Activated CD4-positive, alpha-beta T cell treated with anti-CD3 and anti-CD28 coated beads, Interleukin-2, amount 10 ng/mL, durations not matched to agents 7 days and 5 days (primary cell): ENCODE measurements at regions of chr6 and their contacts with region 1.

Region 1: DNA sequence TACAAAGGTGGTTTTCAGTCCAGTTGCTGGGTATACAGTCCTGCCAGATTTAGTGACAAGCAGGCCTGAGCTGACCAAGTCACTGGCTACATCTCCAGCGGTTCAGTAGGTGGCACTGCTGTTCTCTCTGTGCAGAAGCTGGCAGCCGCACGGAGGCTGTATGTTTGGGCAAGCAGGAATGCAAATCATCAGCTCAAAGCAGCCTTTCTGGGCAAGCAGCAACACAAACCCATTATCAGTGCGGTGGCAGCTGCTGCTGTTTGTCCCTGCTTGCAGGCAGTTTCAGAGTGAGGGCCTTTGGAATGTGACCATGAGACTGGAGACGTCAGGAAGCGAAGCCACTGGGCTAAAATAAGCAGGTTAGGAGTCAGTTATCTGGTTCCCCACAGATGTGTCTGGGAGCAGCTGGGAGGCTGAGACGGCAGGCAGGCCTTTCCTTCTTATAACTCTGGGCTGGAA is 72.5 kb downstream of the TXLNB start:
- DNase-seq: peak; percentile 82
- H3K4me3 Mint-ChIP-seq: no peak overlapping the region
- H3K27ac Mint-ChIP-seq: peak overlapping the region; percentile 85
- H3K4me1 Mint-ChIP-seq: peaks cover 12% of the 10 kb centered on the region
- H3K27me3 Mint-ChIP-seq: no peaks in the 10 kb centered on the region

Region 2: DNA sequence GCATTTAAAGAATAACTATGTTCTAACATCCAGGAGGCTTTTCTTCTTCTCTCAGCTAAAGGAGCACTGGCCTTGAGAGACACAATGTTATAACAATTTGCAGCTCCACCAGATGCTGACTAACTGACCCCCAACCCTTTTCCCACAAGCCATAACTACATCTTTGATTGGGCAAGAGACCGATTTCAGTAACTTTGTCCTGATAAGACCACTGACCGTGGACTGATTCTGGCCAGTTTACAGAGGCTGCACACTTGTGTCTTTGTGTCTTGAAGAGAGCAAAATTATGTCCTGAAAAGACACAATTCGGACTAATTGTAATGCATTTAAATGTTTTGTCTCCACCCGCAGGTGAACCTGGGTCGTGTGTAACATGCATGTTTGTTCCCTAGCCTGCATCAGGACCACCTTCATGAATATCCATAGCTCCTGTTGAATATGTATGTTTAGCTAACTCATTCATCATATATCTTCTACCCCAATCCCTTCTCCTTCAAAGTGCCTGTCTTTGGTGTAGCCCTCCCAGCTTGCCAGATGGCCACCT is 168.5 kb before region 1 on chr6:
- CTCF ChIA-PET with region 1: no interaction called
- POLR2A ChIA-PET with region 1: no interaction called
- DNase-seq: no peak
- H3K4me3 Mint-ChIP-seq: no peak overlapping the region
- H3K27ac Mint-ChIP-seq: no peak overlapping the region
- H3K4me1 Mint-ChIP-seq: no peaks in the 10 kb centered on the region
- H3K27me3 Mint-ChIP-seq: peaks cover 1% of the 10 kb centered on the region

Region 3: GRCh38 chr6:139161817-139162284 is 57.4 kb before region 1 on chr6:
- CTCF ChIA-PET with region 1: interaction called, 12 read pairs
- POLR2A ChIA-PET with region 1: no interaction called
- DNase-seq: peak; percentile 79
- H3K4me3 Mint-ChIP-seq: peak overlapping the region; percentile 50
- H3K27ac Mint-ChIP-seq: peak overlapping the region; percentile 95
- H3K4me1 Mint-ChIP-seq: peaks cover 84% of the 10 kb centered on the region
- H3K27me3 Mint-ChIP-seq: no peaks in the 10 kb centered on the region

Region 4: DNA sequence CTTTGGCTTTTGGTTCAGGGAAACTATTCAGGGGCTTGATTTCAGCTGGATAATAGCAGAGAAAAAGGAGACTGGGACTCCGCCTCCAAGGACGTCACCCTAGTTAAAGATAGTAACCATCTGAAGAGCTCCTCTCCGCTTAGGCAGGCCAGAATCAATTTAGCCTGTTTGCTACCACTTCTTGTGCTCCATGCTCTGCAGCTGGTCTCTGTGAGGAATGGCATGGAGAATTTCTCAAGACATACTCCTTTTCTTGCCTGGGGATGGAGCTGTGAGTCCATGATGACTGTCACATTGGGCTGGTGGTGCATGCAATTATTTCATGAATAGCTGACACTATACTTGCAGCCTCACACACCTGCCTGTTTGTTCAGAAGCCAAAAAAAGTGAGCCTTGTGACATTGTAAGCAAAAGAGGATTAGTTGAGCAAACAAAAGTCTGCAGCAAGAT is 11.1 kb after region 1 on chr6:
- CTCF ChIA-PET with region 1: interaction called, 17 read pairs
- POLR2A ChIA-PET with region 1: no interaction called
- DNase-seq: no peak
- H3K4me3 Mint-ChIP-seq: no peak overlapping the region
- H3K27ac Mint-ChIP-seq: no peak overlapping the region
- H3K4me1 Mint-ChIP-seq: no peaks in the 10 kb centered on the region
- H3K27me3 Mint-ChIP-seq: no peaks in the 10 kb centered on the region

Region 5: GRCh38 chr6:139364302-139364981 is 145.1 kb after region 1 on chr6:
- CTCF ChIA-PET with region 1: interaction called, 30 read pairs
- POLR2A ChIA-PET with region 1: no interaction called
- DNase-seq: no peak
- H3K4me3 Mint-ChIP-seq: no peak overlapping the region
- H3K27ac Mint-ChIP-seq: peak overlapping the region; percentile 51
- H3K4me1 Mint-ChIP-seq: peaks cover 43% of the 10 kb centered on the region
- H3K27me3 Mint-ChIP-seq: no peaks in the 10 kb centered on the region

Region 6: DNA sequence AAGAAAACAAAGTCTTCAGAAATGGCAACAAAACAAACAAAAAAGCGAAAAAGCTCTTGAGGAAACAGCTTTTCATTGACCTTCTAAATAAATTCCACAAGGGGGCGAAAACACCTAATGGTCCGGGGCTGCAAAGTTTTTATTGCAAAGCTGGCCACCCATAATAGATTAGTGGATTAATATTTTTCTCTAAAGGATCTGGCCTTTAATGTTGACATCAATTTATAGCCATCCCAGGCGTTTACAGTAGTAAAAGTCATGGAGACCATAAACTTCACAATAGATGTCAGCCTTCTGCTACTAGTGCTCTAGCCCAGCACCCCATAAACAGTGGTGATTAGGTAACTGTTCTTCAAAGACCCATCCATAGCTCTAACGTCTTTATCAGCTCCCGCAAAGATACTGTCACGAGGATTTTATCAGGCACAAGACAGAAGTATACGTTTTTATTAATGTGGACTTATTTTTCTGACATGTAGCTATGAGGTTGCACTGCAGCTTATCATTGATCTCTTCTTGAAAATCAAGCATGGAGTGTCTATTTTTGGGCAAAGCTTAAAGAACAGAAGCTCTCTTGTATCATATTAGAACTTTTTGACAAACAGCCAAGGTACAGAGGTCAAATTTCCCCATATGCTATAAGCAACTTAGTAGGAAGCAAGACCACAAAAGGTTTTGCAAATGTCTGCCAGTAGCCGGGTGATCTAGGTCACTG is 150.4 kb after region 1 on chr6:
- CTCF ChIA-PET with region 1: interaction called, 30 read pairs
- POLR2A ChIA-PET with region 1: no interaction called
- DNase-seq: peak; percentile 22
- H3K4me3 Mint-ChIP-seq: no peak overlapping the region
- H3K27ac Mint-ChIP-seq: no peak overlapping the region
- H3K4me1 Mint-ChIP-seq: peaks cover 44% of the 10 kb centered on the region
- H3K27me3 Mint-ChIP-seq: no peaks in the 10 kb centered on the region

Region 7: DNA sequence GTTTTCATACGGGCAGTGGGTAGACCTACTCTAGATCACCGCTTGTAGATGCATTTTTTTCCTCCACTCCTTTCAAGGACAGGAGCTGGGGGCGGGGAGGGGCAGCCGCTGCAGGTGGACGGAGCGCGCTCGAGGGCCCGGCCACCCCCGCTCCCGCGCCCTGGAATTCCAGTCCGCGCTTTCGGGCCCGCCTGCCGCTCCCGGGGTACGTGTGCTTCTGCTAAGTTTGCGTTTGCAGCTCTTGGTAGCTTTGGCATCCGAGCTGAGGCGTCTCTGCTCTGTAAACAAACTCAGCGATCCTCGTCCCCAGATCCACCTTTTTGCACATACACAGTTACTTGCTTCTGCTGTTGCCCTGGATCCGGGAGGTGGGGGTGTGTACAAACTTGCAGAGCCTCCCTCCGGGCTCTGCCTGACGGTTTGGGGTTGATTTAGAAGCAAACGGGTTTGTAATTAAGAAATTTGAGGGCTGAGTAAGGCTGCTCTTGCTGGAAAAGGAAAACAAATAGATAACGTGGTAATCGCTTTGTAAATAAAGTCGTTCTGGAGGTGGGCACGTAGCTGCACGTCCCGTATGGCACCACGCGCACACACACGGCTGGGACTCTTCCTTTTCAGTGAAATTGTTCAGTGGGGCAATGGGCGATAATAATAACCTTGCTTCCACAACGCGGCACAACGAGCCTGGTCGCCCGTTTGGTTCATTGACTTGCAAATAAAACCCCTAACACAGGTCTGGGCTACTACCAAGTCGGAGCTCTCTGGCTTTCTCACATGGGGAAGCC is 156.1 kb after region 1 on chr6:
- CTCF ChIA-PET with region 1: interaction called, 26 read pairs
- POLR2A ChIA-PET with region 1: no interaction called
- DNase-seq: peak; percentile 89
- H3K4me3 Mint-ChIP-seq: peak overlapping the region; percentile 93
- H3K27ac Mint-ChIP-seq: peak overlapping the region; percentile 99
- H3K4me1 Mint-ChIP-seq: peaks cover 37% of the 10 kb centered on the region
- H3K27me3 Mint-ChIP-seq: no peaks in the 10 kb centered on the region

Region 8: DNA sequence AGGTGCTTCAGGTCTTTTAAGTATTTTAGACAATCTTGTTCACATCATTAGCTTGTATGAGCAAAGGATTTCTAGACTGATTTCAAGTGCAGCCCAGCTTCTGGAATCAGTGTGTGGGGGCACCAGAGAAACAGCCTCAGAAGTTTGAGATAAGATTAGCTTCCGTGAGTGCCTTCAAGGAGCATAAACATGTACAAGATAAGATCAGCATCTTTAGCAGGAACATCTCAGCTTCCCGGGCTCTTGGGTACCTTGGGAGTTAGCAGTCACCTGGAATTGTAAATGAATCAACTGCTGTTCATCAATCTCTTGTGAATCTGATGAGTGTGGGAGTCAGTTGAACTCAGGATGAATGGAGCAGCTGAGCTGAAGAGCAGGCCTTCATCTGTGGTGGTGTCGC is 167.1 kb after region 1 on chr6:
- CTCF ChIA-PET with region 1: no interaction called
- POLR2A ChIA-PET with region 1: no interaction called
- DNase-seq: no peak
- H3K4me3 Mint-ChIP-seq: no peak overlapping the region
- H3K27ac Mint-ChIP-seq: no peak overlapping the region
- H3K4me1 Mint-ChIP-seq: no peaks in the 10 kb centered on the region
- H3K27me3 Mint-ChIP-seq: no peaks in the 10 kb centered on the region